Mammary epithelial cell (primary cell): ENCODE measurements at regions of chr14 and their contacts with region 1.

Region 1: DNA sequence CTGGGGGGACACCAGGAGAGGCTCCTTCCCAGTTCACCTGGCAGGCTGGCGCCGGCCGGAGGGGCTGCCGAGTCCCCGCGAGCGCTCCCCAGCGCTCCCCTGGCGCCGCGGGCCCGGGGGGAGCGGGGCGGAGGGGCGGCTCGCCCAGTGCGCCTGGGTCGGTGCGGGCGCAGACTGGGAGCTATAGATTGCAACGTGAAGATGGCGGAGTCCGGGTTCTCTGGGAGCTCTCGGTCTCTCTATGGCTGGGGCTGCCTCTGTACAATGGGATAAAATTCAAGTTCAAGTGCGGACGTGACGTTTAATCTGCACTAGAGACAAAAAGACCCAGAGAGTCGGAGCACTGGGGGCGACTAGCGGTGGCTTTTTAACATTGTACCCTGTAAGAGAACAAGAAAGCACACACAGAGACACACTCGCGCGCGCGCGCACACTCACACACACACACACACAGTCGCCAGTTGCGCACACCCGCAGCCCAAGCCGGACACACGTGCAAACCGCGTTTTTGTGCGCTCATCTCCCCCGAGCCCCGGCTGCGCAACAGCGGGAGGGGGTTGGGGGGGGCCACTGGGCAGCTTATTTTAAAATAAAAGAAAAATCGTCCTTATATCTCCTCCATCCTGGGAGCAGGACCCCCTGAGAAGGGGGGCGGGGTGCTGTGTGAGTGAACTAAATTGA is at the start of gene BCL11B:
- DNase-seq: peak; percentile 88
- H3K4me3 ChIP-seq: peak within 1 kb of the TSS; percentile 56 to 87 (median 77)
- H3K27ac ChIP-seq: peak within 1 kb of the TSS; percentile 56
- H3K4me1 ChIP-seq: peaks cover 20% of the 10 kb centered on the region
- H3K27me3 ChIP-seq: no peaks in the 10 kb centered on the region
- CTCF ChIP-seq: peak; percentile 44 to 58
- total RNA-seq, gene BCL11B: 7.1 to 8.3 TPM

Region 2: DNA sequence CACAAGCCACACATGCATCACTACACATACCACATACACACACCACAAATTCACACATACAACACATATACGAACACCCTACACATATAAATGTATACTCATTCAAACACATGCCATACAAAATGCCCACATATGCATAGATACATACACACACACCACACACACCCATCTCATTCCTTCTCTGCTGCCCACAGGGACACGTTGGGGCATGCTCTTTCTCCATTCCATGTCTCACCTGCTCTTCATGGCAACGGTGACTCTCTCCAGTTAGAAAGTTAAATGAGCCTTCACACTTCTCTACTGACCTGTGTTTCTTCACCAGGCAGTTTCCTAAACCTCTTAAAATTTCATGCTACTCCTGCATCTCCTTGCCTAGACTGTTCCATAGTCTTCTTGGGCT is 1194.9 kb before region 1 on chr14:
- CTCF ChIA-PET with region 1: no interaction called
- dilution Hi-C with region 1: no loop called
- in situ Hi-C with region 1: no loop called
- intact Hi-C with region 1: loop called (anchors 5 kb)
- DNase-seq: peak; percentile 85
- H3K4me3 ChIP-seq: no peak overlapping the region
- H3K27ac ChIP-seq: peak overlapping the region; percentile 48
- H3K4me1 ChIP-seq: peaks cover 13% of the 10 kb centered on the region
- H3K27me3 ChIP-seq: no peaks in the 10 kb centered on the region
- CTCF ChIP-seq: no peak

Region 3: GRCh38 chr14:98270201-98270600 is 1001.9 kb before region 1 on chr14:
- CTCF ChIA-PET with region 1: no interaction called
- dilution Hi-C with region 1: no loop called
- in situ Hi-C with region 1: no loop called
- intact Hi-C with region 1: loop called (anchors 5 kb)
- DNase-seq: peak; percentile 63
- H3K4me3 ChIP-seq: no peak overlapping the region
- H3K27ac ChIP-seq: peak overlapping the region; percentile 49
- H3K4me1 ChIP-seq: peaks cover 11% of the 10 kb centered on the region
- H3K27me3 ChIP-seq: no peaks in the 10 kb centered on the region
- CTCF ChIP-seq: no peak

Region 4: GRCh38 chr14:98578204-98578603 is 693.9 kb before region 1 on chr14:
- CTCF ChIA-PET with region 1: no interaction called
- dilution Hi-C with region 1: no loop called
- in situ Hi-C with region 1: no loop called
- intact Hi-C with region 1: loop called (anchors 2 kb)
- DNase-seq: peak; percentile 94
- H3K4me3 ChIP-seq: no peak overlapping the region
- H3K27ac ChIP-seq: peak overlapping the region; percentile 92
- H3K4me1 ChIP-seq: peaks cover 22% of the 10 kb centered on the region
- H3K27me3 ChIP-seq: no peaks in the 10 kb centered on the region
- CTCF ChIP-seq: no peak

Region 5: GRCh38 chr14:99192028-99192621 is 80.0 kb before region 1 on chr14:
- CTCF ChIA-PET with region 1: no interaction called
- dilution Hi-C with region 1: no loop called
- in situ Hi-C with region 1: no loop called
- intact Hi-C with region 1: loop called (anchors 5 kb)
- DNase-seq: peak; percentile 51
- H3K4me3 ChIP-seq: peak overlapping the region; percentile 45 to 60 (median 46)
- H3K27ac ChIP-seq: no peak overlapping the region
- H3K4me1 ChIP-seq: peaks cover 10% of the 10 kb centered on the region
- H3K27me3 ChIP-seq: no peaks in the 10 kb centered on the region
- CTCF ChIP-seq: no peak

Region 6: DNA sequence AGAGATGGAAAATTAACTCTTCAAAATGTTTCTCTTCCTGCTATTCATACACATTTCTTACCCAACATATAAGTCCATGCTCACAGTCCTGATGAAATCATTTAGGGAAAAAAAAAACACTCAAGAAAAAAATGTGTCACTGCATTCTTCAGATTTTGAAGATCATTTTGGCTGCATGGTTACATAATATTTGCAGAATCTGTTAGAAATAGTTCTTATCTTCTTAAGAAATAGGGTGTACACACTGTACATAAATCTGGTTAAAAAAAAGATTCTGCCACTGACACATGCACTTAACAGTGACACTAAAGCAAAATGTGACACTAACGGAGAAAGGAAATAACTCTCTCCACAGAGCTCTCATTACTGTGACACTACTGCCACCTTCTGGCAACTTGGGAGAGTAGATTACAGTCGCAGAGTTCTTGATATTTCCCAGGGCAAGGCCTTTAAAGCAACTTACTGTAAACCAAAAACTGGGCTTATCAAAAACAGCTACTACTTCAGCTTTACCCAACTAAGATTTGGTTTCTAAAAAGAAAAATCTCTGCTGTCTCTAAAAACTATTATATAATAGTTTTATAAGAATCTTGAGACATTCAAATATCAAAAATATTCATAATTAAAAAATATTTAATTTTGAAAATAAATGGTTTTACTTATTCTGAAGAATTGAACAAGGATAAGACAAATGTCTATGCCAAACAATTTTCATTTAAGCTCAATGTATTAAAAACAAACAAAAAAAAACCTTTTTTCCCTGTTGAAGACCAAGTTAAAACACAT is 143.6 kb after region 1 on chr14:
- CTCF ChIA-PET with region 1: no interaction called
- dilution Hi-C with region 1: no loop called
- in situ Hi-C with region 1: no loop called
- intact Hi-C with region 1: loop called (anchors 2 kb)
- DNase-seq: peak; percentile 66
- H3K4me3 ChIP-seq: no peak overlapping the region
- H3K27ac ChIP-seq: no peak overlapping the region
- H3K4me1 ChIP-seq: peaks cover 5% of the 10 kb centered on the region
- H3K27me3 ChIP-seq: no peaks in the 10 kb centered on the region
- CTCF ChIP-seq: peak; percentile 80 to 83